ENCODE measurements at regions of chr2 and their contacts with region 1.

Region 1: GRCh38 chr2:203453858-203454451 is 81.1 kb downstream of the RAPH1 start:
- DNase-seq: no peak
- H3K4me3 Mint-ChIP-seq: no peak overlapping the region
- H3K27ac Mint-ChIP-seq: no peak overlapping the region
- H3K4me1 Mint-ChIP-seq: no peaks in the 10 kb centered on the region
- H3K27me3 Mint-ChIP-seq: no peaks in the 10 kb centered on the region

Region 2: GRCh38 chr2:203225423-203226039 is 228.4 kb before region 1 on chr2:
- intact Hi-C with region 1: loop called (anchors 2 kb)
- DNase-seq: no peak
- H3K4me3 Mint-ChIP-seq: no peak overlapping the region
- H3K27ac Mint-ChIP-seq: no peak overlapping the region
- H3K4me1 Mint-ChIP-seq: no peaks in the 10 kb centered on the region
- H3K27me3 Mint-ChIP-seq: no peaks in the 10 kb centered on the region

Region 3: GRCh38 chr2:203376173-203376572 is 77.8 kb before region 1 on chr2:
- intact Hi-C with region 1: no loop called
- DNase-seq: no peak
- H3K4me3 Mint-ChIP-seq: no peak overlapping the region
- H3K27ac Mint-ChIP-seq: no peak overlapping the region
- H3K4me1 Mint-ChIP-seq: no peaks in the 10 kb centered on the region
- H3K27me3 Mint-ChIP-seq: no peaks in the 10 kb centered on the region

Measured in activated T-helper 2 cell treated with anti-CD3 and anti-CD28 coated beads, Interferon-gamma antibody, Interleukin-2, Interleukin-4, amounts not matched to agents 10 μg/mL and 5 μg/mL and 100 μg/mL, durations not matched to agents 14 hours and 24 hours and 36 hours (primary cell).